ENCODE measurements at regions of chr12 and their contacts with region 1.

Region 1: DNA sequence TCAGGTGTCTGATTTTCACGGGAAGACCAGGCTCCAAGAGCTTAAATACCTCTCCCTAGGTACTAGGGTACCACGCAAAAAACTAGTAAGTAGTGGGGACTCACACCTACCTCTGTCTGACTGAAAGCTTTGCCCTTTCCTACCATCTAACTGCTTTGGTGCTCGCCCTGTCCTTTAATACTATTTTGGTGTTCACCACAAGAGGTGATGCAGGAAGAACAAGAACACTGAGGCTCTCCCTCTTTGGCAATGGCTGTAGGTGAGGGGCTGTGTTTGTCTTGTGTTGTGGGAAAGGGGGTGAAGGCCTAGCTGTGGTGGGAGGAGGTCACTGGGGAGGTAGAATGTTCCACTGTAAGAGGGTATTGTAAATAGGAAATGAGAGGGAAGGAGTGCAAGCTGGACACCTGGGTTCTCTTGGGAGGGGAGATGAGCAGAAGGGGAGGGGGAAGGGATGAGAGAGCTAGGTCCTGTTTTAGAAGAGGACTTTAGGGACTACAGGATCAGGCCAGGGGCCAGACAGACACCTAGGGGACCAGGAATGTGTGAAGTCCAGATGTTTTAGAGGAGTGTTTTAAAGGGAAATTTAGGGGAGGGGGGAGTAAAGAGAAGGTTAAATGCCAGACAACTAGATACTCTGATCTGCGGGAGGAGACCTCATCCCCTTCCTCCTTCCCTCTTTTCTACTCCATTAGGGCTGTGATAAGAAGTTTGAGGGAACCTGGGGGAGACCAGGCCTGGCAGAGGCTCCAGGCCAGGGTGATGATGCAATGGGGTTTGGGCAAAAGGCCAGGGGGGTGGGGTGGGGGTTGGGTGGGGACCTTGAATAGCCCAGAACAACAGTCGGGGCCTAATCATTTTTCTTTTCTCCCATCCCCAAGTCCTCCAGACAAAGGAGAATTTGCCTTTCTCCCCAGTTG is 2.1 kb downstream of the ITGA5 start:
- DNase-seq: no peak
- H3K4me3 ChIP-seq: peak overlapping the region; percentile 94
- H3K27ac ChIP-seq: peak overlapping the region; percentile 90
- H3K4me1 ChIP-seq: peaks cover 68% of the 10 kb centered on the region
- H3K27me3 ChIP-seq: no peaks in the 10 kb centered on the region
- CTCF ChIP-seq: no peak

Region 2: DNA sequence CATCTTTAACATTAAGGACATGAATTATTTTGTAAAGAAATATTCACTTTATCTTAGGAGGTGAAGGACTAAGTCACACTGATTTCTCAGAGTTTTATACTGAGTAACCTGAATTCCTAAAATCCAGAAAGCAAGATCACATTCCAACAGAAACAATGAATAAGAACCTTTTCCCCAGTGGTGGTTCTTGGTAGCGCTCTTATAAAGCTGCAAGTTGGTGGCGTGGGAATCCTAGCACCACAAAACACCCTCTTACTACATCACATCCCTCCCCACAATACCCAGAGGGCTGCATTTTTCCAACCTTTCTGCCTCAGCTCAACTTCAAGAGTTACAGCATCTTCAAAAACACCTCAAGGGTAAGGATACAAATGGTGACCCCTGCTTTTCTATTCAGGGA is 184.2 kb before region 1 on chr12:
- CTCF ChIA-PET with region 1: no interaction called
- POLR2A ChIA-PET with region 1: no interaction called
- intact Hi-C with region 1: no loop called
- DNase-seq: peak; percentile 44
- H3K4me3 ChIP-seq: no peak overlapping the region
- H3K27ac ChIP-seq: no peak overlapping the region
- H3K4me1 ChIP-seq: peaks cover 4% of the 10 kb centered on the region
- H3K27me3 ChIP-seq: no peaks in the 10 kb centered on the region
- CTCF ChIP-seq: peak; percentile 32; the same call in 1 of the 2 replicates

Region 3: GRCh38 chr12:54352891-54353874 is 63.8 kb before region 1 on chr12:
- CTCF ChIA-PET with region 1: no interaction called
- POLR2A ChIA-PET with region 1: interaction called, 13 read pairs
- intact Hi-C with region 1: no loop called
- DNase-seq: no peak
- H3K4me3 ChIP-seq: no peak overlapping the region
- H3K27ac ChIP-seq: peak overlapping the region; percentile 75
- H3K4me1 ChIP-seq: peaks cover 45% of the 10 kb centered on the region
- H3K27me3 ChIP-seq: no peaks in the 10 kb centered on the region
- CTCF ChIP-seq: no peak

Region 4: DNA sequence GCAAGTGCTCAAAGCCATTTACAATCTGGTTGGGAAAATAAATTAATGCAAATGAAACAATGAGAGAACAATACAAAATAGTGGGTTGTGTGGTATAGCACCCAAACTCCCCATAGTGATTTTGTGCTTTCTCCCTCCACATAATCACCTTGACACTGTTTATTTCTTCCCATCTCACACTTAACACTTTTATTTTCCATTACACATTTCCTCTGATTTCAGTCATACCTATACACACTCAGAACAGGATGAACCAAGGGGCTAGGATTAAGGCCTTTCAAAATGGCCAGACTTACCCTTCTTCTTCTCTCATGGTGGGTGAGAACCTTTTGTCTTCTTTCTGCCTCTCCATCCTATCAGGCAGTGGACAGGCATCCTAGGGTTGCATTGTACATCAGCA is 118.5 kb after region 1 on chr12:
- CTCF ChIA-PET with region 1: no interaction called
- POLR2A ChIA-PET with region 1: no interaction called
- intact Hi-C with region 1: no loop called
- DNase-seq: no peak
- H3K4me3 ChIP-seq: no peak overlapping the region
- H3K27ac ChIP-seq: no peak overlapping the region
- H3K4me1 ChIP-seq: no peaks in the 10 kb centered on the region
- H3K27me3 ChIP-seq: no peaks in the 10 kb centered on the region
- CTCF ChIP-seq: no peak